AG04450 (cell line): ENCODE measurements at regions of chr9 and their contacts with region 1.

Region 1: GRCh38 chr9:121213136-121213806 is 11.6 kb upstream of the RAB14 start:
- DNase-seq: peak; percentile 77
- H3K4me3 ChIP-seq: no peak overlapping the region
- H3K27ac ChIP-seq: no peak overlapping the region
- H3K27me3 ChIP-seq: no peaks in the 10 kb centered on the region
- CTCF ChIP-seq: peak; percentile 99

Region 2: GRCh38 chr9:121059998-121060636 is 153.2 kb before region 1 on chr9:
- CTCF ChIA-PET with region 1: no interaction called
- POLR2A ChIA-PET with region 1: no interaction called
- DNase-seq: peak; percentile 80
- H3K4me3 ChIP-seq: no peak overlapping the region
- H3K27ac ChIP-seq: no peak overlapping the region
- H3K27me3 ChIP-seq: no peaks in the 10 kb centered on the region
- CTCF ChIP-seq: peak; percentile 81

Region 3: GRCh38 chr9:121201045-121201737 is 12.1 kb before region 1 on chr9:
- CTCF ChIA-PET with region 1: interaction called, 10 read pairs
- POLR2A ChIA-PET with region 1: interaction called, 3 read pairs
- DNase-seq: no peak
- H3K4me3 ChIP-seq: peak overlapping the region; percentile 81
- H3K27ac ChIP-seq: no peak overlapping the region
- H3K27me3 ChIP-seq: no peaks in the 10 kb centered on the region
- CTCF ChIP-seq: no peak

Region 4: GRCh38 chr9:121267689-121268597 is 54.7 kb after region 1 on chr9 and contains the start of gene GSN:
- CTCF ChIA-PET with region 1: interaction called, 12 read pairs
- POLR2A ChIA-PET with region 1: no interaction called
- DNase-seq: no peak
- H3K4me3 ChIP-seq: peak within 1 kb of the TSS; percentile 93
- H3K27ac ChIP-seq: peak within 1 kb of the TSS; percentile 77
- H3K27me3 ChIP-seq: peaks cover 2% of the 10 kb centered on the region
- CTCF ChIP-seq: peak; percentile 26; the same call in 1 of the 2 replicates
- polyA plus RNA-seq, gene GSN: 421 and 565 TPM in 2 replicates

Region 5: DNA sequence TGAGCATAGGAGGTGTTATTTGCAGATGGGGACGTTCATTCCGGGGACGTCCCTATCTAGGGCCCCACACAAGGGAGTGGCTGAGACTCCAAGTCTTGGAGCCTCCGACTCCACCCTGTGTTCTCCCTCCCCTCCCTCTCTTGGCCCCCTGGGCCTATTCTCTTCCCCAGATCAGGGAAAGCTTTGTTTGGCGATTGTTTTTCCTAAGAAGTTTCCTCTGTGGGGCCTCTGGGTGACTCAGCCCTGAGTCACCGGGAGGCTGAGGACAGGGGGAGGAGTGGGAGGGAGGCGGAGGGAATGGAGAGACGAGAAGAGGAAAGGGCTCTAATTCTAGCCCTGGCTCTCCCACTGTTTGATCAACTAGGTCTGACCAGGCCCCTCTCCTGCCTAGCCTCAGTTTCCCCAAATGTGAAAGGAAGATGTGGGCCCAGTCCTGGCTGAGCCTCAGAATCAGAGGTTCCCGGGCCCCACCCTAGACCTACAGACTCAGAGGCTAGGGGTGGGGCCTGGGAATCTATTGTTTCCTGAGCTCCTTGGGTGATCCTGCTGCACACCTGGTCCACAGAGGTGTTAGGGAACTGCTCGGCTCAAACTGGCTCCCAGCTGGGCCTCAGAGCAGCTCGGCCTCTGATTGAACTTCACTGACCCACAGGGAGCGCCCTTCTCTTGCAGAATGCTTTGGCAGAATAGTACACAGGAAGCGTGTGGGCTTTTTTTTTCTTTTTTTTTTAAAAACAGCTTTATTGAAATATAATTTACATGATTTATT is 73.9 kb after region 1 on chr9:
- CTCF ChIA-PET with region 1: interaction called, 11 read pairs
- POLR2A ChIA-PET with region 1: no interaction called
- DNase-seq: peak; percentile 80
- H3K4me3 ChIP-seq: peak overlapping the region; percentile 20; the same call in 1 of the 2 replicates
- H3K27ac ChIP-seq: peak overlapping the region; percentile 93
- H3K27me3 ChIP-seq: no peaks in the 10 kb centered on the region
- CTCF ChIP-seq: peak; percentile 27; the same call in 1 of the 2 replicates

Region 6: GRCh38 chr9:121376214-121376830 is 163.1 kb after region 1 on chr9:
- CTCF ChIA-PET with region 1: interaction called, 28 read pairs
- POLR2A ChIA-PET with region 1: no interaction called
- DNase-seq: no peak
- H3K4me3 ChIP-seq: no peak overlapping the region
- H3K27ac ChIP-seq: no peak overlapping the region
- H3K27me3 ChIP-seq: no peaks in the 10 kb centered on the region
- CTCF ChIP-seq: peak; percentile 53

Region 7: DNA sequence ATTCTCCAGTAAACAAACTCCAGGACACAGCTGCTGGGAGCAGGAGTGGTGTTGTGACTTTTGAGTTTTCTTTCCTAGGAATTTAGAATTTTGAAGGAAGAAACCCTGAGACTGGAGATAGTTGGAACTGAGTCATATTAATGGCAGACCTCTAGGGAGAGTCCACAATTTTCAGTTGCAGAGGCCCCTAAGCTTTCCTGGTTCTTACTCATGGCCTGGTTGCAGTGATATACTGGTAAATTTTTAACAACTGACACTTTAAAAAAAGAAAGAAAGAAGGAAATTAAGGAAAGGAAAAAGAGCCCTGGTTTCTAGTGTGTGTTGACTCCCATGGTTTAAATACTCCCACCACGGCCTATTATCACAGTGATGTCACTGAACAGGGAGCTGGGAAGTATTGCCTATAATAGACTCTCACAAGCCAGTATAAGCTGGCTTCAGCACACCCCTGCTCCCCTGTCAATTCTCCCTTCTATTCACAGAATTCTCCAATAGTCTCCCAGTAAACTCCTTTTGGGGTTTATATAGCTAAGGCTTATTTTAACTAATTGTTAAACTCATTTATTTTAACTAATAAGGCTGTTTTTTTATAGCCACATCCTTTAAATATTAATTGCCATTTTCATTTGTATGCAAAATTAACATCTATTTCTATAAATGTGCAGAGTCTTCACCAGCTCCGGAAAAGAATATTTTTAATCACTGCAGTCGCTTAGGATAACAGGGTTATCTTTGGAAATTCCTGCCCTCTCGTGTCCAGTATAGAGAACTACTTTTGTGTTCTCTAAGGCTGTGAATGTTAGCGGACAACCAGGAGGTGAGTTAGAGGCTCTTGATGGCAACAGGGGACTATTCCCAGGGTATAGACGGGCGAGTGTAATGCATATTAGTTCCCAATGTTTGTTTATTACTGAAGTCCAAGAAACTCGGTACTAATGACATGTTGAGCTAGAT is 226.7 kb after region 1 on chr9:
- CTCF ChIA-PET with region 1: interaction called, 38 read pairs
- POLR2A ChIA-PET with region 1: no interaction called
- DNase-seq: no peak
- H3K4me3 ChIP-seq: no peak overlapping the region
- H3K27ac ChIP-seq: no peak overlapping the region
- H3K27me3 ChIP-seq: peaks cover 50% of the 10 kb centered on the region
- CTCF ChIP-seq: peak; percentile 55